Ovary (tissue), 10 donors: ENCODE measurements at regions of chr7 and their contacts with region 1.

Region 1: GRCh38 chr7:66894463-66895080 is 26.5 kb upstream of the TMEM248 start:
- DNase-seq: no peak
- H3K4me3 ChIP-seq: no peak overlapping the region
- H3K27ac ChIP-seq: no peak overlapping the region
- H3K4me1 ChIP-seq: no peaks in the 10 kb centered on the region
- H3K27me3 ChIP-seq: no peaks in the 10 kb centered on the region
- CTCF ChIP-seq: no peak
- EP300 ChIP-seq: no peak
- POLR2A ChIP-seq: no peak

Region 2: GRCh38 chr7:66204822-66205740 is 689.5 kb before region 1 on chr7 and contains the start of gene TPST1:
- intact Hi-C with region 1: no loop called
- DNase-seq: peak; percentile 89 to 96 (median 92)
- H3K4me3 ChIP-seq: peak within 1 kb of the TSS; percentile 61
- H3K27ac ChIP-seq: peak within 1 kb of the TSS; percentile 37 to 65
- H3K4me1 ChIP-seq: peaks cover 4% of the 10 kb centered on the region
- H3K27me3 ChIP-seq: no peaks in the 10 kb centered on the region
- CTCF ChIP-seq: peak; percentile 80 to 93 (median 93)
- EP300 ChIP-seq: no peak
- POLR2A ChIP-seq: peak; percentile 92
- total RNA-seq, gene TPST1: 24.0 to 42.5 (median 30.3) TPM

Region 3: DNA sequence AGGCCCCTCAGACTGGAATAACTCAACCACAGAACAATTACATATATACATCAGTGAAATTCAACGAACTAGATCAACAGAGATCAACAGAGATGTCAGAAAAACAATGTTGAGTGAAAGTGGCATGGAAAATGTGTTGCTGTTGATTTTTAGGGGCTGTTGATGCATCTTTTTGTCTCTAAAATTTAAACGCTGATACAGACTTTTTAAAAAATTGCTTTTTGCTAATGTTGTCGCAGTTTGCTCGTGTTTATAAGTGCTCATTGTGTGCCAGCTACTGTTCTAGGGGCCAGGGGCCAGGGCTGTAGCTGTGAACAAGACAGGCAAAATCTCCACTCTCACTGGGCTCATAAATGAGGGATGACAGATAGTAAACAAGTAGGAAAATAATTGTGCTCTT is 44.8 kb after region 1 on chr7:
- intact Hi-C with region 1: no loop called
- DNase-seq: no peak
- H3K4me3 ChIP-seq: no peak overlapping the region
- H3K27ac ChIP-seq: no peak overlapping the region
- H3K4me1 ChIP-seq: peaks cover 3% of the 10 kb centered on the region
- H3K27me3 ChIP-seq: no peaks in the 10 kb centered on the region
- CTCF ChIP-seq: no peak
- EP300 ChIP-seq: no peak
- POLR2A ChIP-seq: no peak

Region 4: DNA sequence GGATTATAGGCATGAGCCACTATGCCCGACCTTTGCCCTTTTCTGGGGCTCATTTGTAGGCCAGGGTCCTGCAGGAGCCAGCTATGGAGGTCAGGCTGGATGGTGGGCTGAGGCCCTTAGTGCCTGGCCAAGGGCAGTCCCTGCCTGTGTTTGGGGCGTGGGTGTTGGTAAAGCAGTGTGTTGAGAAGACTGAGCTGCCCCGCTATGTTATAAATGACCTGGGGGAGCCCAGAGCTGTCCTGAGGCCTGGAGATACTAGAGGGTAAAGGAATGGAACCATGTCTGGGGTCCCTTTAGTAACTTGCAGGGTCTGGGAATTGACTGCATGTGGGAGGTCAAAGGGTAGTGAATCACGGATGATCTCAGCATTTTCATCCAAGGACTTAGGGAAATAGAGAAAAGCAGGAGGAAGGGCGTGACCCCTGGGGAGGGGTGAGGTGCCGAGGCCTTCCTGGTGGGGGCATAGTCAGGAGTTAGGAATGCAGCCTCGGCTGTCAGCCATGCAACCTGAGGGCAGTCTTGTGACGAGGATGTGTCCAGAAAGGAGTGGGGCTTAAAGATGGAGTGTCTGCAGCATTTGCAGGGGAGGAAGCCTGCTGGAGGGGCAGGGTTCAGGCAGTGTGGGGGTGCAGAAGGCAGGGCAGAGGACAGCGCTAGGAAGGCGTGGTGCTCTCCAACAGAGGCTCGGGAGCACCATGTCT is 57.9 kb after region 1 on chr7:
- intact Hi-C with region 1: loop called in 1 of 4 experiments (anchors 10 kb)
- DNase-seq: no peak
- H3K4me3 ChIP-seq: no peak overlapping the region
- H3K27ac ChIP-seq: no peak overlapping the region
- H3K4me1 ChIP-seq: no peaks in the 10 kb centered on the region
- H3K27me3 ChIP-seq: no peaks in the 10 kb centered on the region
- CTCF ChIP-seq: no peak
- EP300 ChIP-seq: no peak
- POLR2A ChIP-seq: no peak